Activated naive CD4-positive, alpha-beta T cell treated with anti-CD3 and anti-CD28 coated beads for 36 hours (primary cell): ENCODE measurements at regions of chrX and their contacts with region 1.

Region 1: DNA sequence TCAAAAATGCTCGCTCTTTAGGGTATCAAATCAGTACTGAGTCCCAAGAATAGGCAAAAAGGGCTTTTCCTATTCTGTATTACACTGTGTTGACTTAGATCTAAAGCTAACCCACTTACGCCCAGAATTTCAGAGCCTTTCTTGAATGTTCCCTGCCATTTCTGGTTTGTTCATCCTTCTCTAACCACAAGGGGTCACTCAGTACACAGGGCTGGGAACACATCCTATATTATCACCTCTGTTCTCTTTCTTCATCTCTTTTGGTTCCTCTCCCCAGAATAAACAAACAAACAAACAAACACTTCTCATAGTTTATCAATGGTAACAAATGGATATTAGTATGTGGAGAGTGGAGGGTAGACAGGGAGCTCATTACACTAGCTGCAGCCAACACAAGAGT is 25.5 kb upstream of the MORC4 start:
- DNase-seq: no peak
- H3K4me3 Mint-ChIP-seq: no peak overlapping the region
- H3K27ac Mint-ChIP-seq: no peak overlapping the region
- H3K4me1 Mint-ChIP-seq: no peaks in the 10 kb centered on the region
- H3K27me3 Mint-ChIP-seq: no peaks in the 10 kb centered on the region

Region 2: DNA sequence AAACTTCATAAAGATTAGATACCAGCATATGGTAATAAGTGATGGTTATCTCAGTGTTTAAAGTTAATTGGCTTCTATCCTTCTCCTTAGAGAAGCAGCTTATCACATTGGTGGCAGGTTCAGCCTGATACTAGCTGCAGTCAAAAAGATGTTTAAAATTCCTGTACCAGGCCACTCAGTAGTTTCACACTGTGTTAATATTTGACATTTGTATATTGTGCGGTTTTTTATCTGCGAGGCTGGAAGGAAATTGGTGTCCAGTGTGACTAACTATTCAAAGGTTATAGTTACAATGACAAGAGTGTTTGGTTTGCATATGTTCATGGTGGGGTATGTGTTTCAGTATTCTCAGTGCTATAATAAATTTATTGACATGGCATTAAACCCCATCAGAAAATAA is 250.6 kb before region 1 on chrX:
- CTCF ChIA-PET with region 1: no interaction called
- intact Hi-C with region 1: no loop called
- DNase-seq: no peak
- H3K4me3 Mint-ChIP-seq: no peak overlapping the region
- H3K27ac Mint-ChIP-seq: no peak overlapping the region
- H3K4me1 Mint-ChIP-seq: no peaks in the 10 kb centered on the region
- H3K27me3 Mint-ChIP-seq: peaks cover 2% of the 10 kb centered on the region

Region 3: DNA sequence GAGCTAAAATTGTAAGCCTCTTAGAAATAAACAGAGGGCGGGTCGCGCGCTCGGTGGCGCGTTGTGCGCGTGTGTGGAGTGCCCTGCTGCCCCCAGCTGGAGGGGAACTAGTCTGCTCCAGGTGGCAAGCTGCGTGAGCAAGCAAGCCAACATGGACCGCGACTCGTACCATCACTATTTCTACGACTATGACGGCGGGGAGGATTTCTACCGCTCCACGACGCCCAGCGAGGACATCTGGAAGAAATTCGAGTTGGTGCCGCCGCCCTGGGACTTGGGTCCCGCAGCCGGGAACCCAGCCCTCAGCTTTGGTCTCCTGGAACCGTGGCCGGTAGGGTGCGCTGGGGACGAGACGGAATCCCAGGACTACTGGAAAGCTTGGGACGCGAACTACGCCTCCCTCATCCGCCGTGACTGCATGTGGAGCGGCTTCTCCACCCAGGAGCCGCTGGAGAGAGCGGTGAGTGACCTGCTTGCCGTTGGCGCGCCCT is 246.9 kb after region 1 on chrX:
- CTCF ChIA-PET with region 1: no interaction called
- intact Hi-C with region 1: loop called (anchors 10 kb)
- DNase-seq: peak; percentile 39
- H3K4me3 Mint-ChIP-seq: peak overlapping the region; percentile 32
- H3K27ac Mint-ChIP-seq: no peak overlapping the region
- H3K4me1 Mint-ChIP-seq: no peaks in the 10 kb centered on the region
- H3K27me3 Mint-ChIP-seq: peaks cover 16% of the 10 kb centered on the region

Region 4: GRCh38 chrX:107324499-107325320 is 299.2 kb after region 1 on chrX:
- CTCF ChIA-PET with region 1: interaction called, 5 read pairs
- intact Hi-C with region 1: loop called (anchors 1 kb)
- DNase-seq: peak; percentile 34
- H3K4me3 Mint-ChIP-seq: no peak overlapping the region
- H3K27ac Mint-ChIP-seq: no peak overlapping the region
- H3K4me1 Mint-ChIP-seq: no peaks in the 10 kb centered on the region
- H3K27me3 Mint-ChIP-seq: no peaks in the 10 kb centered on the region

Region 5: DNA sequence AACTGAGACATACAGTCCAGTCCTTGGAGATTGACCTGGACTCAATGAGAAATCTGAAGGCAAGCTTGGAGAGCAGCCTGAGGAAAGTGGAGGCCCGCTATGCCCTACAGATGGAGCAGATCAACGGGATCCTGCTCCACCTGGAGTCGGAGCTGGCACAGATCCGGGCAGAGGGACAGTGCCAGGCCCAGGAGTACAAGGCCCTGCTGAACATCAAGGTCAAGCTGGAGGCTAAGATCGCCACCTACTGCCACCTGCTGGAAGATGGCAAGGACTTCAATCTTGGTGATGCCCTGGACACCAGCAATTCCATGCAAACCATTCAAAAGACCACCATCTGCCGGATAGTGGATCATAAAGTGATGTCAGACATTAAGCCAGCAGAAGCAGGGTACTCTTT is 403.5 kb after region 1 on chrX:
- CTCF ChIA-PET with region 1: no interaction called
- intact Hi-C with region 1: loop called (anchors 5 kb)
- DNase-seq: peak; percentile 46
- H3K4me3 Mint-ChIP-seq: no peak overlapping the region
- H3K27ac Mint-ChIP-seq: no peak overlapping the region
- H3K4me1 Mint-ChIP-seq: no peaks in the 10 kb centered on the region
- H3K27me3 Mint-ChIP-seq: no peaks in the 10 kb centered on the region

Region 6: DNA sequence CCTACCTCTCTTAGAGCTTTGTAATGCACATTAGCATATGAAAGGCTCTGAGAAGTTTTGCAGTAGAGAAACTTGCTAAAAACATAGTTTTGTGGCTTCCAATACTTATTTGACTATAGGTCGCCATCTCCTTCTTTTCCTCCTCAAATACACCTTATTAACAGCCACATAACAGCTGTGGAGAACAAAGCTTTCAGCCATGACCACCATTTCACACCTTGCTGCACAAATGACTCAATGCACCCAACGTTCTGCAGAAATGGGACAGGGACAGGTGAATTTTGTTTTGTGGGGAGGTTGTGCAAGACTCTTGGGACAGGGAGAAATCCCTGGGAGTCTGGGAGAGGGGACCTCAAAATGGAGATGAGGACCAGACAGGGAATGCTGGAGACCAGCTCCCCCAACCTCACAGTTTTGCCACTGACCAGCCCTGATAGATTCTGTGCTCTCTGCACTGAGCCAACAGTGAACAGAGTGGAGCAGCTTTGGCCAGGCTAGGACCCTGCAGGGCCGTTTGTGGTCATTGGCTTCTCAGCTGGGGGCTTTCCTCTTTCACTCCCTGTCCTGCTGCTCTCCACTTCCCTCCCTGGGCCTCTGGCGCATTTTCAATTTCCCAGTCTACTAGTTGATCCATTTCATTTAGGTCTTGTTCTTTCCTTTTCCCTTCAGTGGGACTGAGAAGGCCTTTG is 440.5 kb after region 1 on chrX:
- CTCF ChIA-PET with region 1: no interaction called
- intact Hi-C with region 1: loop called (anchors 5 kb)
- DNase-seq: peak; percentile 41
- H3K4me3 Mint-ChIP-seq: no peak overlapping the region
- H3K27ac Mint-ChIP-seq: no peak overlapping the region
- H3K4me1 Mint-ChIP-seq: no peaks in the 10 kb centered on the region
- H3K27me3 Mint-ChIP-seq: peaks cover 7% of the 10 kb centered on the region